Heart right ventricle (tissue), 16 donors: ENCODE measurements at regions of chr11 and their contacts with region 1.

Region 1: DNA sequence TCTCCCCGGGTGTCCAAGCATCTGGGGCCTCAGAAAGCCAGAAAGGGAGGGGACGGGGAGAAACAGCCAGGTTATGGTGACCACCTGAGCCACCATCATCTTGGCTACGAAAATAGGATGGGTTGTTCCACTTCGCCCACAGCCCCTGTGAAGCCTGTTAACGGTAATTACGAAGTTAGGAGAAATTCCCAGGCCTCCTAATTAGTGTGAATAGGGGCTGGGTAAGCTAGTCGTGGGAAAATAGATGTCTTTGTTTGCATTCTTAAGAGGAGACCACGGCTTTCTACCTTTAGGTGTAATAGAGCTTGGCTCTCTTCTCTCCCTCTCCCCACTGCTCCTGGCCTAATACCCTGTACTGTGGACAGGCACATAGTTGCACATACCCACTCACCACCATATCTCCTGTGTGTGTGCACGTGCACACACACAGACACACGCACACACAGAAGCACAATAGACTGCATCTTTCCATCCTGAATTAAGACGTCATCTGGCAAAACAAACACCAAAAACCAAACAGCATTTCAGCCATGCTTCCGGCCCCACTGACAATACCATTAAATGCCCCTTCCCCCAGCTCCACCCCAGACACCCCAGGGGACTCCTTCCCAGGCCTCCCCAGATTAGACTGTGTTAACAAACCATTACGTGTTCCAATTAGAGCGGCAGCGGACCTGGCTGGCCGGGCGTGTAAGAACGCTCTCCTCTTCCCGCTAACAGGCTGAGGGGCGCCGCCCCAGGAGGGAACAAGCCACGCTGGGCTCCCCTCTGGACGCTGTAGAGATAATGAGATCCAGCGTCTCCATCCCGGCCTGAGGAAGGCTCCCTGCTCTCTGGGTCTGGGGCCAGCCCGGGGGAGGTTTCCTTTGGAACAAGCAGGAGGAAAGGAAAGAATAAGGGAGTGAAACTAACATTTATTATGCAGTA is 72.8 kb downstream of the TP53I11 start:
- DNase-seq: no peak
- ATAC-seq: peak in 7 of 8 donors; percentile 23 to 56 (median 40)
- H3K4me3 ChIP-seq: no peak overlapping the region
- H3K27ac ChIP-seq: peak overlapping the region in 4 of 10 donors; percentile 1 to 54 (median 16)
- H3K4me1 ChIP-seq: peaks cover 0 to 36% (median 14%) of the 10 kb centered on the region in 9 donors
- H3K27me3 ChIP-seq: no peaks in the 10 kb centered on the region
- CTCF ChIP-seq: no peak

Region 2: GRCh38 chr11:44848203-44848962 is 29.5 kb before region 1 on chr11:
- intact Hi-C with region 1: loop called in 1 of 10 experiments (anchors 2 kb)
- DNase-seq: no peak
- ATAC-seq: no peak
- H3K4me3 ChIP-seq: no peak overlapping the region
- H3K27ac ChIP-seq: peak overlapping the region in 2 of 10 donors; percentile 72 to 74
- H3K4me1 ChIP-seq: peaks cover 9 to 63% (median 28%) of the 10 kb centered on the region in 9 donors
- H3K27me3 ChIP-seq: no peaks in the 10 kb centered on the region
- CTCF ChIP-seq: no peak